Spleen (tissue), 13 donors: ENCODE measurements at regions of chr4 and their contacts with region 1.

Region 1: GRCh38 chr4:8403173-8403753 is 37.3 kb downstream of the ACOX3 start:
- DNase-seq: peak; percentile 91
- H3K4me3 ChIP-seq: no peak overlapping the region
- H3K27ac ChIP-seq: peak overlapping the region in 2 of 8 donors; percentile 28 to 32
- H3K4me1 ChIP-seq: peaks cover 0 to 20% (median 12%) of the 10 kb centered on the region in 6 donors
- H3K27me3 ChIP-seq: no peaks in the 10 kb centered on the region
- CTCF ChIP-seq: peak; percentile 75 to 94 (median 87)
- POLR2A ChIP-seq: no peak

Region 2: GRCh38 chr4:8241895-8242696 is 161.2 kb before region 1 on chr4:
- intact Hi-C with region 1: loop called (anchors 5 kb)
- DNase-seq: peak; percentile 96
- H3K4me3 ChIP-seq: no peak overlapping the region
- H3K27ac ChIP-seq: peak overlapping the region in 3 of 8 donors; percentile 37 to 55 (median 49)
- H3K4me1 ChIP-seq: peaks cover 10 to 67% (median 31%) of the 10 kb centered on the region in 6 donors
- H3K27me3 ChIP-seq: peaks cover 0 to 17% (median 0%) of the 10 kb centered on the region in 7 donors
- CTCF ChIP-seq: peak; percentile 73 to 98 (median 96)
- POLR2A ChIP-seq: no peak